ENCODE measurements at regions of chr11 and their contacts with region 1.

Region 1: GRCh38 chr11:68889948-68890446 is 13.6 kb downstream of the MRPL21 start:
- DNase-seq: peak; percentile 79
- ATAC-seq: peak; percentile 95
- H3K4me3 Mint-ChIP-seq: no peak overlapping the region
- H3K27ac Mint-ChIP-seq: no peak overlapping the region
- H3K4me1 Mint-ChIP-seq: peaks cover 5% of the 10 kb centered on the region
- H3K27me3 Mint-ChIP-seq: no peaks in the 10 kb centered on the region
- CTCF ChIP-seq: peak; percentile 34; the same call in 1 of the 2 replicates

Region 2: GRCh38 chr11:68436985-68437926 is 452.7 kb before region 1 on chr11:
- CTCF ChIA-PET with region 1: no interaction called
- POLR2A ChIA-PET with region 1: no interaction called
- DNase-seq: no peak
- ATAC-seq: no peak
- H3K4me3 Mint-ChIP-seq: no peak overlapping the region
- H3K27ac Mint-ChIP-seq: 0 out of 2 replicates have a peak overlapping the region, but pooled peaks have one; percentile 47
- H3K4me1 Mint-ChIP-seq: peaks cover 18% of the 10 kb centered on the region
- H3K27me3 Mint-ChIP-seq: no peaks in the 10 kb centered on the region
- CTCF ChIP-seq: no peak

Region 3: GRCh38 chr11:68773521-68774193 is 116.3 kb before region 1 on chr11:
- CTCF ChIA-PET with region 1: no interaction called
- POLR2A ChIA-PET with region 1: no interaction called
- DNase-seq: no peak
- ATAC-seq: no peak
- H3K4me3 Mint-ChIP-seq: no peak overlapping the region
- H3K27ac Mint-ChIP-seq: peak overlapping the region; percentile 70
- H3K4me1 Mint-ChIP-seq: no peaks in the 10 kb centered on the region
- H3K27me3 Mint-ChIP-seq: no peaks in the 10 kb centered on the region
- CTCF ChIP-seq: no peak

Region 4: DNA sequence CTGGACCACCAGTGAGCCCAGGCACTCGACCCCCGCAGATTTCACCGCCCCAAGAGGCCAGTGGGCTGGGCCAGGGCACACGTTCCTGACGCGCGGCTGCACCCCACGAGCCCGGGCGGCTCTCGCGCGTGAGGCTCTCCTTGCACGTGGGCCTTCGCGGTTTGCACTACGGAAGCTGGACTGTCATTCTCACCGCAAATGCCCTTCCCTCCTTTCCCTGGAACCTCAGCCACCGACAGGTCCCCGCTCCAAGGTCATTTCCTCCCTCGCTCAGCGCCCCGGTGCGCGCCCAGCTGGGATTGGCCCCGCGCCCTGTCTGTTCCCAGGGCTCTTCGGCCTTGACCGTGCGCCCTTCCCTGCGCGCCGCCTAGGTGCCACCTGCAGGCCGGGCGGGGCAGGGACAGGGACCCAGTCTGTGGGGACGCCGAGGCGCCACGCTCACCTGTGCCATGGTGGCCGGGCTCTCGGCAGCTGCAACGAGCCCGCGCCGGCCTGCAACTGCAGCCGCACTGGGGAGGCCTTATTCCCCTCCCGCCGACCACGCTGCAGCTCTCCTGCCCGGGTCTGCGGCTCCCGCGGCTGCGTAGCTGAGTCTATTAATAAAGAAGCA is 46.2 kb before region 1 on chr11:
- CTCF ChIA-PET with region 1: interaction called, 10 read pairs
- POLR2A ChIA-PET with region 1: no interaction called
- DNase-seq: peak; percentile 80
- ATAC-seq: peak; percentile 66
- H3K4me3 Mint-ChIP-seq: peak overlapping the region; percentile 71
- H3K27ac Mint-ChIP-seq: no peak overlapping the region
- H3K4me1 Mint-ChIP-seq: peaks cover 33% of the 10 kb centered on the region
- H3K27me3 Mint-ChIP-seq: peaks cover 67% of the 10 kb centered on the region
- CTCF ChIP-seq: 0 out of 2 replicates have a peak, but pooled peaks have one; percentile 21

Region 5: DNA sequence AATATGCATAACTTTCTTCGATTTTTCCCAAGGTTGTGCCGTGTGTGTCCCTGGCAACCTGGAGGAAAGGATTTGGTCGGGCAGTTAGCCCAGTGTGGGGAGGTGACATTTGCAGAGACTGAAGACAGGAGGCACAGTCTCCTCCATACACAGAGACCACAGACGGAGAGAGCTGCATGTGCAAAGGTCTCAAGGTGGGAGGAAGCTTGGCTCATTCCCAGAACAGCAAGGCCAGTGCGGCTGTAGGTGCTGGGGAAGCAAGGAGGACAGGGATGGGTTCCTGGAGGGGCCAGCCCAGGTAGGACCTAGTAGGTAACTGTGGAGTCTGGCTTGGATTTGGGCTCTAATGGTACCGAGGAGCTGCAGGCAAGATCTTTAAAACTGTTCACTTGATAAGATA is 27.6 kb before region 1 on chr11:
- CTCF ChIA-PET with region 1: no interaction called
- POLR2A ChIA-PET with region 1: no interaction called
- DNase-seq: no peak
- ATAC-seq: no peak
- H3K4me3 Mint-ChIP-seq: no peak overlapping the region
- H3K27ac Mint-ChIP-seq: no peak overlapping the region
- H3K4me1 Mint-ChIP-seq: no peaks in the 10 kb centered on the region
- H3K27me3 Mint-ChIP-seq: no peaks in the 10 kb centered on the region
- CTCF ChIP-seq: no peak

Region 6: DNA sequence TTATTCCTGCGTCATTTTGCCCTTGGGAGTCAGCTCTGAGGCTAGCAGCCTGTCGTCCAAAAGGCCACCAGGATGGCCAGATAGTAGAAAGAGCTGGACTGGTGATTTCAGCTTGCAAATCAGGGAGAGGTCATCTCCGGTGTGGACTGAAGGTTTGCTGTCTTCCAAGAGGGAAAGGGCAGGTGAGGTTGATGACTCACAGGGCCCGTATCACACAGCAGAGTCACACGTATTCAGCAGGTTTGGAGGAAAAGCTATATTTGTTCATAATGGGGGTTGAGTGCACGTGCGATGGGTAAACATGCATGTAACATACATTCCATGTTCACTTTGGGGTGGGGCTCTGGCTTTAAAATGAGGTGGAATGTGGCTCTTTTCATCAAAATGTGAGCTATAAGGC is 12.0 kb before region 1 on chr11:
- CTCF ChIA-PET with region 1: interaction called, 19 read pairs
- POLR2A ChIA-PET with region 1: no interaction called
- DNase-seq: no peak
- ATAC-seq: no peak
- H3K4me3 Mint-ChIP-seq: no peak overlapping the region
- H3K27ac Mint-ChIP-seq: no peak overlapping the region
- H3K4me1 Mint-ChIP-seq: no peaks in the 10 kb centered on the region
- H3K27me3 Mint-ChIP-seq: no peaks in the 10 kb centered on the region
- CTCF ChIP-seq: no peak

Region 7: DNA sequence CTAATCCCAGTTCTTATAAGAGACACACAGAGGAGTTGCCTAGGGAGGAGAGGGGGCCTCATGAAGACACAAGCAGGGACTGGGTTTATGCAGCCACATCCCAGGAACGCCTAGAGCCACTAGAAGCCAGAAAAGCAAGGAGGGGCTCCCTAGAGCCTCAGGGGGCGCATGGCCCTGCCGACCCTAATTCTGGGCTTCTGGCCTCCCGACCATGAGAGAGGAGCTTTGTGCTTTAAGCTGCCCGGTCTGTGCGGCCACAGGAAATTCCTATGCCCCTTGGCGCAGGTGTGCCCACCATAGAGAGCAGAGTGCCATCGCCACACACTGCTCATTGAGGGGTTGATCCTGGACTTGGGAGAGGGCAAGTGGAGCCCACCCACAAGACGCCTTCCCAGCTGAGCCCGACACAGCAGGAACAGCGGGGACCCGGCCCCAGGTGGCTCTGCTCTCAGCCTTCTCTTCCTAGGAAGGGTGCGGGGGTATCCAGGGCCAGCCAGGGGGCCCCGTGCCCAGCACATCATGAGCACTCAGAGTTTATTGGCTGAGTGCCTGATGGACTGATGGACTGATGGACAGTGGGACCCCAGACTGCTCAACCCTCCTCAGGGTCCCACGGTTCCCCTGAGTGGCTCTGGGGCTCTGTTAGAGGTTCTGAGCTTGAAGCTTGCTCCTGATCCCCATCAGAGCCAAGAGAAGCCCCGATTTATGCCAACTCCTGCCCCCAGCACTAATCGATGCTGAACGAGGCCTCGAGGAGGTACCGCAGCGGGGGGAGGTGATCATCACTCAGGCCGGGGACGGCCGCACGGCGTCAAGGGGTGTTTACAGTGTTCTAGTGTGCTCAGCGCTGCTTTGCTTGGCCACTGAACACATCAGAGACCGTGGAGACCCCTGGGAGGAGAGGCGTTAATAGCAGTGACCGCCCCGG is 104.2 kb after region 1 on chr11:
- CTCF ChIA-PET with region 1: no interaction called
- POLR2A ChIA-PET with region 1: no interaction called
- DNase-seq: peak; percentile 10
- ATAC-seq: no peak
- H3K4me3 Mint-ChIP-seq: no peak overlapping the region
- H3K27ac Mint-ChIP-seq: no peak overlapping the region
- H3K4me1 Mint-ChIP-seq: peaks cover 3% of the 10 kb centered on the region; the same call in 1 of the 2 replicates
- H3K27me3 Mint-ChIP-seq: no peaks in the 10 kb centered on the region
- CTCF ChIP-seq: no peak

Measured in WTC11 (cell line).